Dorsolateral prefrontal cortex (tissue), 120 donors: ENCODE measurements at regions of chr13 and their contacts with region 1.

Region 1: DNA sequence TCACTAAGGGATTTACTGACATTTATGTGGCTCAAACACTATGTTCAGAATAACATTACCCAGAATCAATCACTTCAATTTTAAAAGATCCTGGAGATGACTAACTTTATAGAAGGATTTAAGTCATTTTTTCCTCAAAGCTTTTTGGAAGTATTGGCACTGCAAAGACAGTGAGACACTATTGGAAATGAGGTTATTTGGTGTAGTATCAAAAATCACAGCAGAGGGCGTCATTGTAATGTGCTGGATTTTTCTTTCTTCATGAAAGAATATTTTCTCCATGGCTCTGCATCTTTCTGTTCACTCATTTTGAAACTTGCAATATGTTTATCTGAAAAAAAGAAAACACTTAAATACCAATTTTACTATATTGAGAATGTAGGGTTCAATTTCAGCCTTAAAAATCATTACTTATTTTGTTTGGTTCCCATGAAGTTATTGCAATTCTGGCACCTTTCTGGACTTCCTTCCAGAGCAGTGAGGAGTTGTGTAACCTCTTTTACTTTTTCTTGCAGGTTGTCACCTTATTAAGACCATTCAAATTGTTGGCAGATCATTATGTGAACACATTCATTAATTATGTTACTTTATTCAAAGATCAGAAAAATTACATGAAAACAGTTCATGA is 3.7 kb upstream of the CSNK1A1L start:
- DNase-seq: no peak
- H3K4me3 ChIP-seq: no peak overlapping the region
- H3K27ac ChIP-seq: no peak overlapping the region
- H3K27me3 ChIP-seq: no peaks in the 10 kb centered on the region
- CTCF ChIP-seq: peak; percentile 55 to 91 (median 78)

Region 2: GRCh38 chr13:36582977-36583376 is 526.2 kb before region 1 on chr13:
- intact Hi-C with region 1: no loop called
- DNase-seq: no peak
- H3K4me3 ChIP-seq: no peak overlapping the region
- H3K27ac ChIP-seq: no peak overlapping the region
- H3K27me3 ChIP-seq: no peaks in the 10 kb centered on the region
- CTCF ChIP-seq: no peak

Region 3: GRCh38 chr13:37175996-37176395 is 66.8 kb after region 1 on chr13:
- intact Hi-C with region 1: no loop called
- DNase-seq: no peak
- H3K4me3 ChIP-seq: no peak overlapping the region
- H3K27ac ChIP-seq: no peak overlapping the region
- H3K27me3 ChIP-seq: no peaks in the 10 kb centered on the region
- CTCF ChIP-seq: no peak

Region 4: GRCh38 chr13:37602747-37603381 is 493.7 kb after region 1 on chr13:
- intact Hi-C with region 1: loop called (anchors 5 kb)
- DNase-seq: no peak
- H3K4me3 ChIP-seq: peak overlapping the region in 6 of 59 donors; percentile 12 to 30 (median 20)
- H3K27ac ChIP-seq: no peak overlapping the region
- H3K27me3 ChIP-seq: peaks cover 0 to 4% (median 0%) of the 10 kb centered on the region in 45 donors
- CTCF ChIP-seq: peak; percentile 32 to 89 (median 69)

Region 5: GRCh38 chr13:37608750-37609339 is 499.7 kb after region 1 on chr13:
- intact Hi-C with region 1: loop called (anchors 5 kb)
- DNase-seq: no peak
- H3K4me3 ChIP-seq: no peak overlapping the region
- H3K27ac ChIP-seq: no peak overlapping the region
- H3K27me3 ChIP-seq: peaks cover 0 to under 1% (median 0%) of the 10 kb centered on the region in 45 donors
- CTCF ChIP-seq: peak in 52 of 56 donors; percentile 18 to 65 (median 46)